CD8-positive, alpha-beta T cell (primary cell): ENCODE measurements at regions of chr5 and their contacts with region 1.

Region 1: DNA sequence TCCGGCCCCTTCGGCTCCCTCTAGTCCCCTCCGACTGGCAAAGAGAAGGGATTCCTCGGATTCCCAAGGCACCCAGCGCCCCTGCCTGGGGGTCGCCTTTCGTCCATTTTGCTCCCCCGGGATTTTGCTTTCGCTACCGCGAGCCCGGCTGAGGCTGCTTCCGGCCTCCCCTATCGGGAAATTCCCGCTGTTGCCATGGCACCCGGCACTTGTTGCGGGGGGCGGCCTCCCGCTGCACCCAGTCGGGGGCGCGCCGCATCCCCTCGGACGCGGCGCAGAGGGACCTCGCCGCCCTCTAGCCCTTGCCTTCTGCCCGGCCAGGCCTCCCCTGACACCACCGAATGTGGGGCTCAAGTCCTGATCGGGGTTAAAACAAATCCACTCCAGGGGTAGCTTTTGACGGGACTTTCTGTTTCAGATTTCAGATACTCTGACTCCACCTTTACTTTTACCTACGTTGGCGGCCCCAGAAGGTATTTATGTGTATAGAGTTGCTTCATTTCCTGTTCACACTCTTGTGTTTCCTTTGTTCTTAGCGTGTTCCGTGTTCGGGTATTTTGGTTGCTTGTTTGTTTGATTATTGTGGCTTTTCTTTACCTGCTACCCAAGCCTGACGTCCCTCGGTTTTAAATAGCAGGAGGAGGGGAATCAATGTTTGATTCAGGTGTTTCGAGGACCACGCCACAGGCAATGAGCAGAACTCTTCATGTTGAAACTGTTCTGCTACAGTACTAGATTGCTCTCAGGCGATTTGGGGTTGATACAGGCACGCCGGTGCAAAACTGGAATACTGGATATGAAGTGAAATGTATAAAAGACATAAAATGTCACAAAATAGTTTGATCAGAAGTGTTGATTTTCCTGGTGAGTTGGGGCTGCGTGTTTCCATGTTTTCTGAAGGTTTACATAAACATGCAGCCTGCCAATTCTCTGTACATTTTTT is 1.5 kb downstream of the PARP8 start:
- DNase-seq: peak; percentile 74 to 94 (median 89)
- ATAC-seq: peak; percentile 64
- H3K4me3 ChIP-seq: peak overlapping the region; percentile 61 to 92
- H3K4me3 Mint-ChIP-seq: peak overlapping the region; percentile 90
- H3K27ac ChIP-seq: peak overlapping the region; percentile 95 to 98
- H3K27ac Mint-ChIP-seq: peak overlapping the region; percentile 98
- H3K4me1 ChIP-seq: peaks cover 52% of the 10 kb centered on the region
- H3K4me1 Mint-ChIP-seq: peaks cover 63% of the 10 kb centered on the region
- H3K27me3 ChIP-seq: no peaks in the 10 kb centered on the region
- H3K27me3 Mint-ChIP-seq: no peaks in the 10 kb centered on the region
- CTCF ChIP-seq: no peak

Region 2: DNA sequence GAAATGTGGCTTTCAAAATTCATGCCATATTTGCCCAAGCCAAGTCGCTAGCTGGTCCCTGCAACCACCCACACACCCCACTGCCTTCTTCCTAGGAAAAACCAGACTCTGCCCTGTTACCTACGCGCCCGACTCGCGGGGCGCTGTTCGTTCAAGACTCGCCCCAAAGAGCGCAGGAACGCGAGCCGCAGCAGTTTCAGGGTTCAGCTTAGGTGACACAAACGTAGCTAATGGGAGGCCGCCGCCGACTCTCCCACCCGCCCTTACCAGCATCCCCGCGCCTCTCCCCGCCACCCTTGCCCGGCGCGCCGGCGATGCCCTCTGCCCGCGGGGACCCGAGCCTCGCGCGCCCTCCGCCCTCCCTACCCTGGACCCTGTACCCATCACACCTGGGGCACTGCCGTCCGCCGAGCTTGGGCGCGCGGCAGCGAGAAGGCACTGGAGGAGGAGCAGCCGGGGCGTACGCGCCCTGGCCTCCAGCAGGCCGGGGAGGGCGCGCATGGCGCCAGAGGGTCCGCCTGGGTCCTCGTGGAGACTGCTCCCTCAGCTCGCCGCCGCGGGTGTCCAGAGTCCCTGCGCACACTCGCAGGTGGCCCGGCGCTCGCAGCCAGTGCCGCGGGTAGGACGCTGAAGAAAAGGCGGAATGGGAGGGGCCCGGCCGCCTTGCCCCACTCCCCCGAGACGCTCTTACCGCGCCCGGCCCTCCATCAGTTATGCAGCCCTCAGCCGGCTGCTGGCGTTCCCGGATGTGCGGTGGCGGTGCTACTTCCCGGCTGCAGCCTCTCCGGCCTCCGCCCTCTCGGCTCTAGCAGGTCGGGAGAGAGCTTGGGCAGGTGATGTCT is 227.1 kb before region 1 on chr5 and contains the start of gene EMB:
- CTCF ChIA-PET with region 1: interaction called, 9 read pairs
- POLR2A ChIA-PET with region 1: interaction called, 29 read pairs
- intact Hi-C with region 1: loop called (anchors 1 kb)
- DNase-seq: peak; percentile 64 to 92 (median 83)
- ATAC-seq: peak; percentile 67
- H3K4me3 ChIP-seq: peak within 1 kb of the TSS; percentile 66 to 75
- H3K4me3 Mint-ChIP-seq: peak within 1 kb of the TSS; percentile 96
- H3K27ac ChIP-seq: peak within 1 kb of the TSS; percentile 86 to 87
- H3K27ac Mint-ChIP-seq: peak within 1 kb of the TSS; percentile 97
- H3K4me1 ChIP-seq: peaks cover 51% of the 10 kb centered on the region
- H3K4me1 Mint-ChIP-seq: peaks cover 69% of the 10 kb centered on the region
- H3K27me3 ChIP-seq: no peaks in the 10 kb centered on the region
- H3K27me3 Mint-ChIP-seq: no peaks in the 10 kb centered on the region
- CTCF ChIP-seq: peak; percentile 33
- total RNA-seq, gene EMB: 122 to 145 TPM

Region 3: DNA sequence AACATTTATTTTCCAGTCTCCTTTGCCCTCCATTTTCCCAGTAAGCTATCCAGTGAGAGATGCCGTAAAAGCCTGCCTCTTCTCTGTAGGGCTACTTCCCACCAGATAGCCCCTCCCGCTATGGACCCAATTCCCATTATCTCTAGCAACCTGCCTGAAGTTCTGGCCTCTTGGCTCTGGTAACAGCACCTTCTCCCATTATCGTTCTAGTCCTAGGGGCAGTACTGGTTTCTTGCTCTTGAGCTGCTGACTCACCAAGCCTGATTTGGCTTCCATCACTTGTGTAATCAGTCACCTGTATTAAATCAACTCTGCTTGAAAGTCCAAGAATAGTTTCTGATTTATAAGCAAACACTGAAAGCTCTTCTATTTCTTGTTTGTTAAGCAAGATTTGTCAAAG is 44.3 kb before region 1 on chr5:
- CTCF ChIA-PET with region 1: no interaction called
- POLR2A ChIA-PET with region 1: no interaction called
- intact Hi-C with region 1: loop called in 1 of 2 experiments (anchors 5 kb)
- DNase-seq: no peak
- ATAC-seq: no peak
- H3K4me3 ChIP-seq: no peak overlapping the region
- H3K4me3 Mint-ChIP-seq: no peak overlapping the region
- H3K27ac ChIP-seq: no peak overlapping the region
- H3K27ac Mint-ChIP-seq: no peak overlapping the region
- H3K4me1 ChIP-seq: no peaks in the 10 kb centered on the region
- H3K4me1 Mint-ChIP-seq: peaks cover 19% of the 10 kb centered on the region
- H3K27me3 ChIP-seq: no peaks in the 10 kb centered on the region
- H3K27me3 Mint-ChIP-seq: no peaks in the 10 kb centered on the region
- CTCF ChIP-seq: no peak

Region 4: DNA sequence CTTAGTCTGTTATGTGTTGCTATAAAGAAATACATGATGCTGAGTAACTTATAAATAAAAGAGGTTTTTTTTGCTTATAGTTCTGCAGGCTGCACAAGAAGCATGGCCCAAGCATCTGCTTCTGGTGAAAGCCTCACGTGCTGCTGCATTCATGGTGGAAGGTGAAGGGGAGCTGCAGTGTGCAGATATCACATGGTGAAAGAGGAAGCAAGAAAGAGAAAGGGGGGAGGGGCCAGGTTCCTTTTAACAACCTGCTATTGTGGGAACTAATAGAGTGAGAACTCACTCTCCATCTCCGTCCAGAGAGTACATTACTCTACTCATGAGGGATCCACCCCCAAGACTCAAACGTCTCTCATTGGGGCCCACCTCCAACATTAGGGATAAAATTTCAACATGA is 14.0 kb before region 1 on chr5:
- CTCF ChIA-PET with region 1: no interaction called
- POLR2A ChIA-PET with region 1: interaction called, 4 read pairs
- intact Hi-C with region 1: loop called in 1 of 2 experiments (anchors 1 kb)
- DNase-seq: no peak
- ATAC-seq: no peak
- H3K4me3 ChIP-seq: no peak overlapping the region
- H3K4me3 Mint-ChIP-seq: no peak overlapping the region
- H3K27ac ChIP-seq: no peak overlapping the region
- H3K27ac Mint-ChIP-seq: no peak overlapping the region
- H3K4me1 ChIP-seq: peaks cover 9% of the 10 kb centered on the region
- H3K4me1 Mint-ChIP-seq: peaks cover 41% of the 10 kb centered on the region
- H3K27me3 ChIP-seq: no peaks in the 10 kb centered on the region
- H3K27me3 Mint-ChIP-seq: no peaks in the 10 kb centered on the region
- CTCF ChIP-seq: no peak

Region 5: GRCh38 chr5:50711273-50711672 is 43.3 kb after region 1 on chr5:
- CTCF ChIA-PET with region 1: no interaction called
- POLR2A ChIA-PET with region 1: interaction called, 5 read pairs
- intact Hi-C with region 1: loop called (anchors 1 to 5 kb)
- DNase-seq: peak; percentile 17 to 91 (median 57)
- ATAC-seq: peak; percentile 90
- H3K4me3 ChIP-seq: peak overlapping the region; percentile 25 to 37
- H3K4me3 Mint-ChIP-seq: peak overlapping the region; percentile 85
- H3K27ac ChIP-seq: peak overlapping the region; percentile 49 to 77
- H3K27ac Mint-ChIP-seq: peak overlapping the region; percentile 90
- H3K4me1 ChIP-seq: peaks cover 80% of the 10 kb centered on the region
- H3K4me1 Mint-ChIP-seq: peaks cover 81% of the 10 kb centered on the region
- H3K27me3 ChIP-seq: no peaks in the 10 kb centered on the region
- H3K27me3 Mint-ChIP-seq: no peaks in the 10 kb centered on the region
- CTCF ChIP-seq: no peak

Region 6: GRCh38 chr5:50751064-50751657 is 83.2 kb after region 1 on chr5:
- CTCF ChIA-PET with region 1: no interaction called
- POLR2A ChIA-PET with region 1: interaction called, 7 read pairs
- intact Hi-C with region 1: loop called in 1 of 2 experiments (anchors 1 kb)
- DNase-seq: peak in 7 of 9 experiments; percentile 11 to 86 (median 45)
- ATAC-seq: peak; percentile 88
- H3K4me3 ChIP-seq: no peak overlapping the region
- H3K4me3 Mint-ChIP-seq: peak overlapping the region; percentile 40
- H3K27ac ChIP-seq: peak overlapping the region in 1 of 2 experiments; percentile 57
- H3K27ac Mint-ChIP-seq: peak overlapping the region; percentile 73
- H3K4me1 ChIP-seq: peaks cover 44% of the 10 kb centered on the region
- H3K4me1 Mint-ChIP-seq: peaks cover 60% of the 10 kb centered on the region
- H3K27me3 ChIP-seq: no peaks in the 10 kb centered on the region
- H3K27me3 Mint-ChIP-seq: no peaks in the 10 kb centered on the region
- CTCF ChIP-seq: peak; percentile 90